ENCODE measurements at regions of chr1 and their contacts with region 1.

Region 1: DNA sequence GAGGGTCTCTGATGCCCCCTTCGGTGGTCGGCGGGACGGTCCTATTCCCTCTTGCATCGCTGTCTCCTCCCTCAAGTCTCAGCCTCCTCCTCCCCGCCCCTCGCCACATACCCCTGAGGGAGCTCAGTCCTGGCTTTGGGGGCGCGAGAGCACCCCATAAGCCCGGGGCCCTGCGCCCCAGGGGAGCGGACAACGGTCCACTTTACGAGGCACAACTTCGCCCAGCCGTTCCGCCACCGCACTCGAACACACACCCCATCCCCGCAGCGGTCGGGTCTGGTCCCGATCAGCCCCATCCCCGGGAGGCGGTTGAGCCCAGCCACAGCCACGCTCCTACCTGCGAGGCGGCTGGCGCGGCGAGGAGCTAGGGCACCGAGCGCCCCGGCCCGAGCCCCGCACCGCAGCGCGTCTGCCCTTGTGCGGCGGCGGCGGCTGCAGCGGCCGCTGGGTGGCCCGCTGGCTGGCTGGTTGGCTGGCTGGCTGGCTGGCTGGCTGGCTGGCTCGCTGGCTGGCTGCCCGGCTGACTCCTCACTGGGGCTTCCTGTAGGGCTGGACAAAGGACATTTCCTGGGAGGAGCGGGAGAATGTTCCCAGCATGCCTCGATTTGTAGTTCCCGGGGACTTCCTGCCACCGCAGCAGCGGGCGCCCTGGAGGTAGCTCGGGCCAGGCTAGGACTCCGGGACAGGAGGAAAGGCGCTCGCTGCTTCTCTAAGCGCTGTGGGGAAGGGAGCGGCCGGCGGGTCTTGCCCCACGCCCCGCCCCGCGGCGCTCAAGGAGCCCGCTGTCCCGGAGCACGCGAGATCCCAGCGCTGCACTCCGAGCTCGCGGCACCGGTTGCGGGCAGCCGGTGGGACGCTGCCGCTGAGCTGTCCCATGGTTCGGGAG is at the start of gene ZNF697:
- DNase-seq: peak; percentile 93

Region 2: DNA sequence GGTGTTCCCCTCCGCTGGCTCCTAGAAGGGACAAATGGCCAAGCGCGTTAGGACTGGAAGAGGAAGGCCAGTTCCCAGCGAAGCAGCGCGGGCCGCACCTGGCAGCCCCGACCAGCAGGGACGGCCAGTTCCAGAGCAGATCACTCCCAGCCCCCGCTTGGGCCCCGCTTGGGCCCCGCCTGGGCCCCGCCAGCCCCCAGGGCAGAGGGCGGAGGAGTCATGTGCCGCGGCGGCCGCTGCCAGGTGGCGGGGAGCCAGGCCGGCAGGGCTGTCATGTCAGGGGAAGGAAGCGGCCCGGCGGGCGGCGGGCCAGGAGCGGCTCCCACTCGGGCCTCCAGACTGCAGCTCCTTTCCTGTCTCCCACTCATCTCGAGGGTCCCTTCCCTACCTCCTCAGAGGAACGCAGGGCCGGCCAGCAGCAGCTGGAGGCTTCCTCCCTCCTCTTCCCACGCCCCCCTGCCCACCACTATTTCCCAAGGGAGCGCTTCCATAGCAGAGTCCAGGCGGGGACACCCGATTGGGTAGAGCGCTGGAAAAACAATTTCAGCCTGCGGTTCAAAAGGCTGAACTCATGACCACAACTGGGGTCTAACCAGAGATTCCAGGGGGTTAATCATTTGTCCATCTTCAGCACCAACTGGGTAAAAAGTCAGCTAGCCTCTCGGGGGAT is 16.4 kb before region 1 on chr1:
- CTCF ChIA-PET with region 1: interaction called, 11 read pairs
- POLR2A ChIA-PET with region 1: interaction called, 21 read pairs
- DNase-seq: no peak

Region 3: DNA sequence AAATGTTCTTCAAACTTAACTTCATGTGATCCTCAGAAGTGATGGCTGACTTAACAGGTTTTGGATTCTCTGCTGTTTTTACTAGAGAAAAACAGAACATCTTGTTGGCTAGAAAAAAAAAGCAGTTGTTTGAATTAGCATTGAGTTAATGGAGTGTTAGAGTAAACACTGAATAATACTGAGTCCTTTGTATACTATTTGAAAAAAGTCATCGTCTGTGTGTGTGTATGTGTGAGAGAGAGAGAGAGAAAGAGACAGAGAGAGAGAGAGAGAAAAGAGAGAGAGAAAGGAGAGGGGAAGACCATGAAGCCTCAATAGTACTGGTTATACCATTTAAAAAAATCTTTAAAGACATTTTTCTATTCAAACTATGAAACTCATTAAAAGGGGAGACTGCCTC is 10.3 kb before region 1 on chr1:
- CTCF ChIA-PET with region 1: interaction called, 11 read pairs
- POLR2A ChIA-PET with region 1: interaction called, 14 read pairs
- DNase-seq: no peak

Region 4: GRCh38 chr1:119662034-119662437 is 14.1 kb after region 1 on chr1:
- CTCF ChIA-PET with region 1: interaction called, 11 read pairs
- POLR2A ChIA-PET with region 1: interaction called, 20 read pairs
- DNase-seq: no peak

Measured in HEK293T (cell line).